ENCODE measurements at regions of chr2 and their contacts with region 1.

Region 1: DNA sequence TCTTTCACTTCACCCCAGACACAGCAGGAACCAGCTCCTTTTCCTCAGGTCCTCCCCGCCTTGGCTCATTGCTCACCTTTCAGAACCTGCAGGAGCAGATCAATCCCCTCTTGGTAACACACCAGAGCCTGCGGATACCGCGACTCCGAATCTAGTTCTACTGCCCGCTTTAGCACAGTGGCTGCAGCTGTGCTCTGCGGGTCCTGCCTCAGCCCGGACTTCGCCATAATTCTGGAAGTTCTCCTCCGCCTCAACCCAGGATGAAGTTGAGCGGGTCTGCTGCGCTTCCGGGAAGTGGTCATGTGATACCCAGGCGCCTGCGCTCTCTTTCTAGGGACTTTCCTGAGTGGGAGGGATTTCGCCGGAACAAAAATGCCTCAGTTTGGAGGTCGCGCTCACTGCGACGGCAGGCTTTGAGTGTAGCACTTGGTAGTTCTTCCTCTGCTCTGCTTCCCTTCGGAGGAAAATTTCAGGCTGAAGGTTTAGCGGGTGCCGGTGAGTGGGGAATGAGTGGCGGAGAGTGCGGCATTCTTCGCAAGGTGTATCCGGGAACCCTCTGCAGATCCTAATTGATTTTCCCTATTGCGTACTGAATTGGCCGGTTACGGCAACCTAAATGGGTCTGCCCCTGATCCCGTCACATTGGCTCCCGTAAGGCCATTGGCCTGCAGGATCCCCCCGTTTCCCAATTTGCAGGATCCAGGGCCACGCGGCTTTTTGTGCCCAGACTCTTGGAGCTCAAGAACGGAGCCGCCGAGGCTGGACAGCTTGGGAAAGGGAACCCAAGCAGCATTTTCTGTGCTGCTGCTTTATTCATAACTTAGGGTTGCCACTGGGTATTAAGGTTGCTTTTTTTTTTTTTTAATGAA is at the starts of genes MITD1 and MRPL30:
- DNase-seq: peak; percentile 94
- H3K4me3 ChIP-seq: peak within 1 kb of the TSS; percentile 82
- H3K27ac ChIP-seq: peak within 1 kb of the TSS; percentile 32
- H3K4me1 ChIP-seq: peaks cover 17% of the 10 kb centered on the region
- CTCF ChIP-seq: no peak
- total RNA-seq, gene MITD1: 35.9 and 40.2 TPM in 2 replicates
- total RNA-seq, gene MRPL30: 27.7 and 30.9 TPM in 2 replicates

Region 2: DNA sequence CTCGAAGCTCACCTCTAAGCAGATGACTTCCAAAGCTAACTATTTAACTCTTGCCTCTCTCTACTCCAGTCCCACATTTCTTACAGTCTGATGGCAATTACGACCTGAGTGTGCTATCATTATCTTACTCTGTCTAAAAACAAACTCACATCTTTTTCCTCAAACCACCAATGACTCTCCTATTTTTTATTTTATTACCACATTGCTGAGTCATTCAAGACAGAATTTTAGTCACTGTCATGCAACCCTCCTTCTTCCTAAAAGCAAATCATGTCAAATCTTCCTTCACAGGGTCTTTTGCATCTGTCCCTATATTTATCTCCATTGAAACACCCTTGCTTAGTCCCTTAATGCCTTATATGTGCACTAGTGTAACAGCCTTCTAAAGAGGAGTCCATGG is 74.1 kb before region 1 on chr2:
- CTCF ChIA-PET with region 1: no interaction called
- POLR2A ChIA-PET with region 1: no interaction called
- intact Hi-C with region 1: no loop called
- DNase-seq: no peak
- H3K4me3 ChIP-seq: no peak overlapping the region
- H3K27ac ChIP-seq: no peak overlapping the region
- H3K4me1 ChIP-seq: no peaks in the 10 kb centered on the region
- CTCF ChIP-seq: no peak

Region 3: DNA sequence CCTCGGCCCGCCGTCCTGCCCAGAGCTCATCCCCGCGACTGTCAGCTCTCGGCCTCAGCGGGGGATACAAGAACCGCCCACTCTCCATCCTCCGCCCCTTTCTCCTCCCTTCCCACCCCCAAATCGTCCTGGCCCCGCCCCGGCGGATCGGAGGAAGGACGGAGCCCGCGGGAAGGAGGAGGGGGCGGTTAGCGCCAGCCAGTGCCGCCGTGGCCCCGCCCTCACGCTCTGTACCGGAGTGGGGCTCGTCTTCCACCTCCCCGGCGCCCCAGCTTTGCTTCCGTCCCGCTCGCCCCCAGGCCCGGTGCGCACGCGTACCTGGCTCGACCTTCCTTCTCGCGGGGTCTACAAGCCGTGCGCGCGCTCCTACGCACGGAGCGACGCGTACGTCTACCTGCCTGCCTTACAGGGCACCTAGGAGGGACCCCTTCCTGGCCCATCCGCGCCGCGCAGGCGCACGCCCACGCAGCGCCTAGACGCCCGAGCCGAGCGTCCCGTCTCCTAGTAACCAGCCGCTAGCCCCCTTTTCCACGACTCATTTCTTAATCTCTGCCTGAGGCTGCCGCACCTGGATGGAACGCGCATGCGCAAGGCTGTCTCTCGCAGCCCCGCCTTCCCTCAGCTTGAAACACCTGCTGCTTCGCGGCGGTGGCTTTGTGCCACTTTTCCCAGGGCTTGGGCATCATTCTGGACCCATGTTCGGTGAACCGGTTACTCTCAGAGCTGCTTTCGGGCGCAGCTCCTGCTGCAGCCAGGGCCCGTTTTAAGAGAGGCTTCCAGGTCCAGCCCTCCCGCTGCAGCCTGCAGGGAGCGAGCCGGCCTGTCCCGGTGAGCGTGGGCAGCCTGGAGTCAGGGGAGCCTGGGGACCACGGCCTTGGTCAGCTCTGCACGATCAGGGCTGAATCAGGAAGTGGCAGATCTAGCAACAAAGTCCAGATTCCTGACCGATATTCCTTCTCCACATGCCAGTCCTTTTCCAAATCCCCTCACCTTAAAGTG is 39.6 kb before region 1 on chr2 and contains the start of gene C2orf15:
- CTCF ChIA-PET with region 1: no interaction called
- POLR2A ChIA-PET with region 1: interaction called, 3 read pairs
- intact Hi-C with region 1: loop called (anchors 1 kb)
- DNase-seq: peak; percentile 91
- H3K4me3 ChIP-seq: peak within 1 kb of the TSS; percentile 71
- H3K27ac ChIP-seq: peak within 1 kb of the TSS; percentile 48
- H3K4me1 ChIP-seq: peaks cover 12% of the 10 kb centered on the region
- CTCF ChIP-seq: no peak
- total RNA-seq, gene C2orf15: 0.25 and 0.31 TPM in 2 replicates

Region 4: DNA sequence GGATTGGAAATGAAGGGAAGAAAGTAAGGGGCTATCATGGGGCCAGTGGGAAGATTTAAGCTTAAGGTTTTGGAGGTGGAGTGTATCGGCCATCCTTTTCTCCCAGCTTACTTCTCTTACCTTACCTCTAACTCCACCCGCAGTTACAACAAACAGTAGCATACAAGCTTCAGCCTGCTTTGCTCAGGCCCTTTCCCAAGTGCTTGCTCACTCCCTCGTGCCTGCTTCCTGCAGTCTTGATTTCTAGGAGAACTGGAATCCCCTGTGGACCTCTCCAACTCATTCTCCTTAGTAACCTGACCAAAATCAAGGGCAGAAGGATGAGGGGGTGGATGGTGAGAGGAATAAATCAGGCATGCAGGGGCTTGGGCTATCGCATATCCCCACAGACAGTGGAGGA is 80.3 kb after region 1 on chr2:
- CTCF ChIA-PET with region 1: no interaction called
- POLR2A ChIA-PET with region 1: no interaction called
- intact Hi-C with region 1: no loop called
- DNase-seq: no peak
- H3K4me3 ChIP-seq: no peak overlapping the region
- H3K27ac ChIP-seq: no peak overlapping the region
- H3K4me1 ChIP-seq: no peaks in the 10 kb centered on the region
- CTCF ChIP-seq: no peak

Region 5: DNA sequence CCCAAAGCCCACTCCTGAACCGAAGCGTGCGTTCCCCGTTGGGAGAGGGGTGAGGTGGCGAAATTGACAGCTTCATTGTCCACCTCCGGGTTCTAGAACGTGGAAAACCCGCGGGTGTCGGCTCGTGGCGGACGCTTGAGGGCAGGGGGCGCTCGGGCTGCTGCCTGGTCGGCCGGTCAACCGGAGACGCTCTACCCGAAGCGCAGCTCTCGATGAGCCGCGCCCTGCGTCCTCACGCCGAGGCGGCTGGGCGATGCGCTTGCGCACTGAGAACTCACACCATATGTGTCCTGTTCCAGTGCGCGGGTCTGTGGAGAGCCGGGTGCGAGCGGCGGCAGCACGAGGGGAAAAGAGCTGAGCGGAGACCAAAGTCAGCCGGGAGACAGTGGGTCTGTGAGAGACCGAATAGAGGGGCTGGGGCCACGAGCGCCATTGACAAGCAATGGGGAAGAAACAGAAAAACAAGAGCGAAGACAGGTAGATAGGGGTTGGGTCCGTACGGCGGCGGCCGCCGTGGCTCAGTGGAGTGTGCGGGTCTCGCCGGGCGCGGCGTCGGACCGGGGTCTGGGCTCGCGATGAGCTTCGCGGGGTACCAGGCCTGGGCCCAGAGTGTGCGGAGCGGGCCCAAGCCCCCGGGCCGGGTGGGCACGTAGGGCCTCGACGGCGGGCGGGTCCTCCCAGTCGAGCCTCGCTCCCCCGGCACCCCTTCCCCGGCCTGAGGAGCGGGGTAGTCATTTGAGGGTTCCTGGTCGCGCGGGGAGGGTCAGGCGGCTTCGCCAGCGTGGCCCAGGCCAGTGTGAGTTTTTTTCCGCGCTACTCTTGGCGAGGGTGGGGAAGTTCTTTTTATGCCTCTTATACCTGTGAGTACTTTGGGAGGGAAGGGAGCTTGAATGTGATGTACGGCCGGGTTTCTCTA is 156.4 kb after region 1 on chr2 and contains the start of gene EIF5B:
- CTCF ChIA-PET with region 1: no interaction called
- POLR2A ChIA-PET with region 1: interaction called, 19 read pairs
- intact Hi-C with region 1: loop called (anchors 1 kb)
- DNase-seq: peak; percentile 98
- H3K4me3 ChIP-seq: peak within 1 kb of the TSS; percentile 86
- H3K27ac ChIP-seq: peak within 1 kb of the TSS; percentile 83
- H3K4me1 ChIP-seq: peaks cover 33% of the 10 kb centered on the region
- CTCF ChIP-seq: peak; percentile 87
- total RNA-seq, gene EIF5B: 19.9 and 28.7 TPM in 2 replicates

Region 6: GRCh38 chr2:99489761-99490622 is 309.0 kb after region 1 on chr2 and contains the start of gene REV1:
- CTCF ChIA-PET with region 1: no interaction called
- POLR2A ChIA-PET with region 1: no interaction called
- intact Hi-C with region 1: loop called (anchors 1 kb)
- DNase-seq: peak; percentile 96
- H3K4me3 ChIP-seq: peak within 1 kb of the TSS; percentile 78
- H3K27ac ChIP-seq: peak within 1 kb of the TSS; percentile 49
- H3K4me1 ChIP-seq: peaks cover 28% of the 10 kb centered on the region
- CTCF ChIP-seq: peak; percentile 85
- total RNA-seq, gene REV1: 59.4 and 68.1 TPM in 2 replicates

Region 7: DNA sequence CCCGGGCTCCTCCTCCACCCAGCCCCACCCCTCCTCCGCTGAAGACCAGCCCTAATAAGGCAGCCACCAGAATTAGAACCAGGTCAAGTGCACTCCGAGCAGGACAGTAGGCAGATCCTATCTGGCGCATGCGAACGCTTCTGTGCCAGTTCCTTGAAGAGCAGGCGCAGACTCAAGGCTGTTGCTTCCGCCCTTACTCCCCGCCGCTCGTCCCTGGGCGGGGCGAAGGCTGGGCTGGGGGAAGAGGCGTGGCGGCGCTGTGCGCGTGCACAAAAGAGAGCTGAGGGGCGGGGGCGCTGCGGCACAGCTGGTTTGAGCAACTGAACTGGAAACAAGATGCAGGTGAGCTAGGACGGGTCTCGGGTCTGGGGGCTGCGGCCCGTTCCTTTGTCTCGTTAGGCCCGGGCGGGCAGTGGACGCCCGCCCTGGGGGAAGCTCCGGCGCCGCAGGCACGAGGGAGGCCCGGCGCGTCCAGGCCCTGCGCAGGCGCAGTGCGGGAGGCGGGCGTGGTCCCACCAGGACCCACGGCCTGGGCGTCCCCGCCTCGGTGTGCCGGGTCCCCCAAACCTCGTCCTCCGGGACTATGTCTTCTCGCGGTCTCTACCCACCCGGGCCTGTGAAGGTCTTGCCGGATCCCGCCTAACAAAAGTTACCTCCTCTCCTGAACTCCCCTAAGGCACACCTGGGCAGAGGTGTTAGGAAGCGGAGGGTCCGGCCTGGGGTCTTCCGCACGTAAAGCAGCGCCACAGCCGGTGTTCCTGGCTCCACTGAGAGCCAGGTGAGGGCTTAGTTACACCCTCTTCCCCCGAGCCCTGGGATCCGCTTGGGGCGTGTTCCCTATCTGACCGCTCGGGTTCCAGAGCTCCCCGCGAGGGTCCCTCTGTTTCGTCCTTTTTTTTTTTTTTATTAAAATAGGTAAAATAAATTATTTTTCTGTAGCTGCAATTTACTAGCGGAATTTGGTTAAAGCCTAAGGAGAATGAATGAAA is 1382.0 kb after region 1 on chr2 and contains the start of gene PDCL3:
- CTCF ChIA-PET with region 1: no interaction called
- POLR2A ChIA-PET with region 1: no interaction called
- intact Hi-C with region 1: loop called (anchors 10 kb)
- DNase-seq: peak; percentile 98
- H3K4me3 ChIP-seq: peak within 1 kb of the TSS; percentile 79
- H3K27ac ChIP-seq: peak within 1 kb of the TSS; percentile 79
- H3K4me1 ChIP-seq: peaks cover 19% of the 10 kb centered on the region
- CTCF ChIP-seq: 0 out of 2 replicates have a peak, but pooled peaks have one; percentile 3
- total RNA-seq, gene PDCL3: 10.6 and 12.3 TPM in 2 replicates

Measured in OCI-LY7 (cell line).